Breast epithelium (tissue), 4 donors: ENCODE measurements at regions of chr1 and their contacts with region 1.

Region 1: DNA sequence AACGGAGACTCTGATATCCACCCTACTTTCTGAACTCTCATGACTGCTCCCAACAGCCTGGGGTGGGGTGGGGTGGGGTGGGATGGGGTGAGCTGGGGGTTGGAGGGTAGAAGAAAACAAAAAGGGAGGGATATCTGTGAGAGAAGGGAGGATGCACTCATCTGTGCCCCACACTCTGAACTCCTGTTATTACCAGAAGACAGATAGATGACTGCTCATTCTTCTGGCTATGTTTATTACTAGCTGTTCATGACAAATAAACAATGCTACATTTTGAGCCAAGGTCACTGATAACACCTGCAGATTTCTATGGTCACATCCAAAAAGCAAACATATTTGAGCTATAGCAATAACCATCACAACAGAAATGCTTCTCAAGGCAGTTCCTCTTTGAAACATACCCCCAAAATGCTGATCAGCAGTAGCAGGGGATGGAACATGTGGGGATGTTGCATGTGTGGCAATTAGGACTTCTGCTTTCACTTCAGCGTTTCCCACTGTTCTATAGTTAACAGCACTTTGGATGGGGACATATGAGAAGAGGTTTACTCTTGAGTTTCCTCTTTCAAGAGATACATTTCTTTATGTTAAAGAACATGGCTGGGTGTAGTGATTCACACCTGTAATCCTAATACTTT is 43.3 kb downstream of the GPR3 start:
- DNase-seq: no peak
- H3K4me3 ChIP-seq: no peak overlapping the region
- H3K27ac ChIP-seq: peak overlapping the region; percentile 66 to 76
- H3K4me1 ChIP-seq: peaks cover 16 to 25% of the 10 kb centered on the region in 2 donors
- H3K27me3 ChIP-seq: no peaks in the 10 kb centered on the region
- CTCF ChIP-seq: no peak
- POLR2A ChIP-seq: no peak

Region 2: DNA sequence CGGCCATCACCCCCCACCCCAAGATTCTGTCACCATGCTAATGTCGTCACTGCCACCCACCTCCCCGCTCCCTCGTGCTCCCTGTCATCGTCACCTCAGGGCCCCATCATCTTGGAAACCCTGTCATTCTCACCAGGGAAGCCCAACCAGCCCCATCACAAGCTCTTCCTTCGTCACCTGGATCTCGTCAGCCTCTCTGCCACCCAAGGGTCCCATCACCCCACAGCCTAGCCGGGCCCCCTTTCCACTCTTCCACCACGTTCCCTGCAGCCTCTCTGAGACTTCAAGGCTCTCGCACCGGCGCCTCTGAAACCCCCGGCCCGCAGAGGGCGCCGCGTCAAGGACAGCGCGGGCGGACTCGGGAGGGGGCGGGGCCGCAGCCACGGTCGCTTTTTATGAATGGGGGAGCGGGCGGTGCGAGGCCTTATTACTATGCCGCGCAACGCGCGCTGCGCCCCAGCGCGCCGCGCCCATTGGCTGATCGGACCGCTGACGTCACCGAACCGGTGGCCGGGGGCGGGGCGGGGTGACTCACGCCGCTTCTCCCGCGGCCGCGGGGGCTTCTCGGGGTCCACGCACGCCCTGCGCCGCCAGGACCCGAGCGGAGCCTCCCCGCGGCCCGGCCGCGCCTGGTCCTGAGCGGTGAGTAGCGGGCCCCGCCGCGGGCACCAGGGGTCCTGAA is 43.4 kb before region 1 on chr1 and contains the start of gene GPR3:
- intact Hi-C with region 1: no loop called
- DNase-seq: peak; percentile 86 to 87
- H3K4me3 ChIP-seq: peak within 1 kb of the TSS; percentile 33 to 75 (median 54)
- H3K27ac ChIP-seq: peak within 1 kb of the TSS; percentile 46 to 71
- H3K4me1 ChIP-seq: peaks cover 0 to 8% of the 10 kb centered on the region in 2 donors
- H3K27me3 ChIP-seq: no peaks in the 10 kb centered on the region
- CTCF ChIP-seq: peak; percentile 14 to 47 (median 42)
- POLR2A ChIP-seq: no peak
- total RNA-seq, gene GPR3: 0.16 to 0.66 TPM in 2 of 3 donors, not detected in the other

Region 3: DNA sequence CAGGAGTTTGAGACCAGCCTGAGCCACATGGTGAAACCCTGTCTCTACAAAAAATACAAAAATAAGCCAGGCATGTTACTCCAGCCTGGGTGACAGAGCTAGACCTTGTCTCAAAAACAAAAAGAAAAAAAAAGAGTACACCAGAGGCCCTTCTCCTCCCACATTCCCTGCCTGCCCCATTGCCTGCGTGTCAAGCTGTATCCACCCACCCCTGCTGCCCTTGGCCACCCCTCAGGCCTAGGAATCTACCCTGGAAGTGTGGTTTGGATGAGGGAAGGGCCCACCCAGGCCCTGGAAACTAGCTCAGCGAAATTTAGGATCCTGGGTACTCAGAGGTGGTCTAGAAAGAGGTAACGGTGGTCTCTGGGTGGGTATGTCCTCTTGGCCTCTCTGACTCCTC is 80.0 kb after region 1 on chr1:
- intact Hi-C with region 1: loop called (anchors 1 kb)
- DNase-seq: no peak
- H3K4me3 ChIP-seq: no peak overlapping the region
- H3K27ac ChIP-seq: peak overlapping the region; percentile 11 to 52
- H3K4me1 ChIP-seq: peaks cover 0 to 15% of the 10 kb centered on the region in 2 donors
- H3K27me3 ChIP-seq: no peaks in the 10 kb centered on the region
- CTCF ChIP-seq: no peak
- POLR2A ChIP-seq: no peak